Ascending aorta (tissue), 2 donors: ENCODE measurements at regions of chr10 and their contacts with region 1.

Region 1: DNA sequence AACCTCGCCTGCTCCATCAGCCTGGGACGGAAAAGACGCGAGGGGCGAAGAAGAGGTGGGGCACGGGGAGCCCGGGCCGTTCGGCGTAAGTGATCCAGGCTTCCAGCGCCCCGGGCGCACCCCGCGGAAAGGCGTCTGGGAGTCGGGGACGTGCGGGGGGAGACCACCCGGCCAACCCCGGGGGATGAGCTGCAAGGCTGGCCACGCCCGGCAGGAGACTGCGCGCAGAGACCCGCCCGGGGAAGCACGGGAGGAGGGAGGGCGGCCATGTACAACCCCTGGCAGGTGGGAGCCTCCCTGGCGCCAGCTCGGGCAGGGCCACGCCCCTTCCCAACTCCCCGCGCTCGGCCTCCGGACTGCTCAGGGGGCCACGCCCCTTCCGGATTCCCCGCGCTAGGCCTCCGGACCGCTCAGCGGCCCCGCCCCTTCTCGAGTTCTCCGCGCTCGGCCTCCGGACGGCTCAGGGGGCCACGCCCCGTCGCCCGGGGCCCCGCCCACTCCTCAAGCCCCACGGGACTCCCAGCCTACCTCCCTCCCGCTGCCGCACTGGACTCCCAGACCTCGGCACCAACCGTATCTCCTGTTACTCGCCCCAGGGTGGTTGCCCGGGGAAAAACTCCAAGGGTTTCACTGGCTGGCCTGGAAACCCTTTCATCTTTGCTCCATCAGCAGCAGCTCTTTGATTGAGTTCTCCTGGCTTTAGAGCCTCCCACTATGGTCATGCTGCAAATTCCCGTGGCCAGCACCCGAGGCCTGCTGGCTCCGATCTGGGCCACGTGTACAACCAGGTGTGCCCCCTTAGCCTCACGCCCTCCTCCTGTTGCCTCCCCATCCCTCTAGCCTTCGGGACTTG is 284.4 kb downstream of the ZEB1 start:
- DNase-seq: peak; percentile 85 to 97
- H3K4me3 ChIP-seq: peak overlapping the region; percentile 65 to 80
- H3K27ac ChIP-seq: peak overlapping the region; percentile 87 to 89
- H3K4me1 ChIP-seq: no peaks in the 10 kb centered on the region
- H3K27me3 ChIP-seq: no peaks in the 10 kb centered on the region
- CTCF ChIP-seq: peak in 1 of 3 experiments; percentile 6

Region 2: GRCh38 chr10:30727524-30727923 is 875.9 kb before region 1 on chr10:
- intact Hi-C with region 1: loop called (anchors 5 kb)
- DNase-seq: no peak
- H3K4me3 ChIP-seq: no peak overlapping the region
- H3K27ac ChIP-seq: no peak overlapping the region
- H3K4me1 ChIP-seq: peaks cover 0 to 2% of the 10 kb centered on the region in 2 donors
- H3K27me3 ChIP-seq: no peaks in the 10 kb centered on the region
- CTCF ChIP-seq: no peak

Region 3: DNA sequence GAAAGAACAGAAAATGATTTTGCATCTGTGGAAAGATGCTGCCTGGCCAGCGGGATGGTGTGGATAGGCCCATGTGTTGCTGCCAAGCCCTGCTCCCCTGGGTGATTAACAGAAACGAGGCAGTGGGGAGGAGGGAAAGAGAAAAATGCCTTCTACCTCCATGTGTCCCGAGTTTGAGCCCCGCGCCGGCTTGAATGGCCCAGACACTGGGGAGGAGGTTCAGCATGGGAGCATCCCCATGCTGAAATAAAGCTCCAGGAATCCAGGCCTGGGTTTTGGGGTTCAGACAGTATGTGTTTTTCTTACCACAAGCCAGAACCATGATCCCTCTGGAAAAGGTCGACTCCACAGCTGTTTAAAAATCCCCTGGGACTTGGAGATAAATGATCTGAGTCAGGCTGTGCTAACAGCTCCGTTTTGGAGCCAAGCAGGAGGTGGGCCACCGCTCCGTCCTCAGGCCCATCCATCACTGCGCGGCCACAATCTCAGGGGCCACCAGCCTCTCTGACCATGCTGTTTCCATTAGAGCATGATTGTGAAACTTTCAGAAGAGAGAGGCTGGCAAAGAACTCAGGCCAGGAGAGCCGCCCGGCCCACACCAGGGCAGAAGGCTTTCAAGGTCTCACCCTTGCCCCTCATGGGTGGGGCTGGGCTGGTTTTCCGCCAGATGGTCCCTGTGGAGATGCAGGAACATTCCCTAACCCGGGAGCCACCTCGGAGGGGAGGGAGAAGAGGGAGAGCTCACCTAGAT is 15.3 kb after region 1 on chr10:
- intact Hi-C with region 1: loop called (anchors 2 kb)
- DNase-seq: no peak
- H3K4me3 ChIP-seq: no peak overlapping the region
- H3K27ac ChIP-seq: peak overlapping the region in 1 of 2 donors; percentile 8
- H3K4me1 ChIP-seq: peaks cover 8 to 18% of the 10 kb centered on the region in 2 donors
- H3K27me3 ChIP-seq: no peaks in the 10 kb centered on the region
- CTCF ChIP-seq: no peak

Region 4: DNA sequence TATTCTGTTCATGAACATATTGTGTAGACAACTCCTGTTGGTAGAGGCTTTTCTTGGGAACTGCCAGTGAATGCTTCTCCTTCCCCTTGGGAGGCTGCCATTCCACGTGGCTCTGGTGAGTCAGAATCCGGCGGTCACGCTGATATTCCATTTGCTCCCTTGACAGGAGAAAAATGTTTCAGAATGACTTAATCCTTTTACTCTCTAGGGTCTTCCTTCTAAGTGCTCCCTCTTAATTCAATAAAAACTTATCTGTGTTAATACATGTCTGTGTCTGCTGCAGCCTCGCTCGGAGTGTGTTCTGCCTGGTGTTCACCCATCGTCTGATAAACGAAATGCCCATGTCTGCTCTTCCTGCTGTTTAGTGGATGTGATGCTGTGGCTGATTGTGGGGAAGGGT is 46.5 kb after region 1 on chr10:
- intact Hi-C with region 1: loop called (anchors 2 kb)
- DNase-seq: peak; percentile 50 to 90
- H3K4me3 ChIP-seq: peak overlapping the region; percentile 34 to 58
- H3K27ac ChIP-seq: peak overlapping the region; percentile 74 to 93
- H3K4me1 ChIP-seq: peaks cover 0 to 3% of the 10 kb centered on the region in 2 donors
- H3K27me3 ChIP-seq: no peaks in the 10 kb centered on the region
- CTCF ChIP-seq: no peak

Region 5: DNA sequence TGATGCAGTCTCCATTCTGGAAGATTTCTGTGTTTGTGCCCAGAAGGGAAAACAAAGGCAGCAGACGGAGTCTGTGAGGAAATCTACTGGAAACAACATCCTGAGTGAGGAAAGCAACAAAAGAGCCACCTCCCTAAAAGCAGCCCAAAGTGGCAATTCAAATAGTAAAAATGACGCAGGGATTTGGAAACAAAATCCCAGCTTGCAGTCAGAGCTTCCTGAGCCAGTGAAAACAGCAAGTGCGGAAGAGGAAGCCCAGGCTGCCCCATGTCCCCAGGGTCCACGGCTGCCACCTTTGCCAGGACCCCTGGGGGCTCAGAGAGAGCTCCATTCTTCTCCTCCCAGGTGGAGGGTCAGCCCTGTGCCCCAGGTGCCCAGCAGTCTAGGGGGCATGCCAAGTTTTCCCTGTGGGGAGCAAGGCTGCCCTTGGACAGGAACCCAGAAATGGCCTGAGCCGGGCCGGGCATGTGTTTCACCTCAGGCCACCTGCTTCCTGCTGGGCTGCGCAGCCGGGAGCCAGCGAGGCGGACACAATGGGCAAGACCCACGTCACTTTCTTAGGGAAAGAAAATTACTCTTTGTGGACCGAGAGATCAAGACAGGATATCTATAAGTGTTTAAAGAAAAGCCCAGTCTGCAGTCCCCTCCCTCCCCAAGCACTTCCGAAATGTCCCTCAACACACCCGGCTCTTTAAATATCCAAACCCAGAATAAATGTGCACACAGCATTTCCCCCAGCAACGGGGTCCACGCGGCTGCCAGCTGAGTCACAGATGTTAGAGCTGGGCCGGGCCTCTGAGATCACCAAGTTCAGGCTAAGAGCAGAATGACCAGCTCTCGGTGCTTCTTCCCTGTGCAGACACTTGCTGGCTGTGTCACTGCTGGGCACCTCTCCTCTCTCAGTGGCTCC is 94.1 kb after region 1 on chr10:
- intact Hi-C with region 1: loop called (anchors 1 kb)
- DNase-seq: peak; percentile 90 to 98
- H3K4me3 ChIP-seq: peak overlapping the region; percentile 38 to 56
- H3K27ac ChIP-seq: peak overlapping the region; percentile 98 to 99
- H3K4me1 ChIP-seq: peaks cover 13 to 52% of the 10 kb centered on the region in 2 donors
- H3K27me3 ChIP-seq: no peaks in the 10 kb centered on the region
- CTCF ChIP-seq: no peak

Region 6: GRCh38 chr10:31759799-31760626 is 156.6 kb after region 1 on chr10:
- intact Hi-C with region 1: loop called (anchors 2 kb)
- DNase-seq: peak; percentile 95 to 98
- H3K4me3 ChIP-seq: peak overlapping the region; percentile 81 to 84
- H3K27ac ChIP-seq: peak overlapping the region; percentile 92 to 98
- H3K4me1 ChIP-seq: peaks cover 9 to 18% of the 10 kb centered on the region in 2 donors
- H3K27me3 ChIP-seq: no peaks in the 10 kb centered on the region
- CTCF ChIP-seq: no peak